Naive thymus-derived CD4-positive, alpha-beta T cell (primary cell): ENCODE measurements at regions of chr17 and their contacts with region 1.

Region 1: DNA sequence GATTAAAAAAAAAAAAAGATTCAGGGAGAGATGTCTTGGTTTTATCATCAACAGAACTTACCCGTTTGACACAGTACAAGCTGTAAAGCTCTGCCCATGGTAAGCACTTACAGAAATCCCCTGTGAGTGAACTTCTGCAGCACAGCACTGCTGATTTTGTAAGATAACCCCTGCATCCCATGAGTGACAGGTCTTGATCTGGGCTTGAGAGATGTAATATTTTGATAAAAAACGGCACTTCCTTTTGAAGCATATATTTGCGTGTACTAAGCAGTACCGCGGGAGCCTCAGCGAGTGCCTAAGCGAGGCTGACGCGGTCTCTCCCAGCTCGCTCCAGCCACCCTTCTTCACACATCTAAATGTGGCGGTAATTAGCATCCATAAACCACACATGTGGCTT is 50.5 kb downstream of the IKZF3 start:
- DNase-seq: peak in 7 of 9 donors; percentile 62 to 89 (median 71)
- ATAC-seq: peak; percentile 97
- H3K4me3 ChIP-seq: peak overlapping the region; percentile 17
- H3K4me3 Mint-ChIP-seq: peak overlapping the region; percentile 68 to 87 (median 78)
- H3K27ac ChIP-seq: peak overlapping the region; percentile 75
- H3K27ac Mint-ChIP-seq: peak overlapping the region; percentile 83 to 97 (median 91)
- H3K4me1 ChIP-seq: peaks cover 43 to 59% of the 10 kb centered on the region in 2 donors
- H3K4me1 Mint-ChIP-seq: peaks cover 32 to 94% (median 78%) of the 10 kb centered on the region in 7 donors
- H3K27me3 ChIP-seq: no peaks in the 10 kb centered on the region
- H3K27me3 Mint-ChIP-seq: no peaks in the 10 kb centered on the region

Region 2: DNA sequence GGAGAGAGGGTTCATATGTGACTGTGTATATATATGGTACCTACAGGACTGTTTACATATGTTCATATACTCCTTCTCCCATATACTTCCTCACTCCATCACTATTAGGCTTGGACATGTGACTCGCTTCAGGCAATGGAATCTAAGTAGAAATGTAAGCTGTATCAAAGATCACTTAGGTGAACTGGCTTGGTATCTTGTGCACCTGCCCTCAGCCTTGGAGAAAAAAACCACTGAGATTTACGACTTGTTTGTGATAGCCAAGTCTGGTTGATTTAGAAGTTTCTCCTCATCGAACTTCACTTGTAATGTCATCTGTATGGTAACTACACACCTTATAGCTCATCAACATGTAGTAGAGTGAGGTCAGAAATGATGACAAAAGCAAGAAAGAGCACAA is 472.1 kb before region 1 on chr17:
- CTCF ChIA-PET with region 1: no interaction called
- POLR2A ChIA-PET with region 1: no interaction called
- intact Hi-C with region 1: no loop called
- DNase-seq: no peak
- ATAC-seq: no peak
- H3K4me3 ChIP-seq: no peak overlapping the region
- H3K4me3 Mint-ChIP-seq: no peak overlapping the region
- H3K27ac ChIP-seq: no peak overlapping the region
- H3K27ac Mint-ChIP-seq: no peak overlapping the region
- H3K4me1 ChIP-seq: no peaks in the 10 kb centered on the region
- H3K4me1 Mint-ChIP-seq: peaks cover 0 to 11% (median 7%) of the 10 kb centered on the region in 7 donors
- H3K27me3 ChIP-seq: no peaks in the 10 kb centered on the region
- H3K27me3 Mint-ChIP-seq: no peaks in the 10 kb centered on the region

Region 3: DNA sequence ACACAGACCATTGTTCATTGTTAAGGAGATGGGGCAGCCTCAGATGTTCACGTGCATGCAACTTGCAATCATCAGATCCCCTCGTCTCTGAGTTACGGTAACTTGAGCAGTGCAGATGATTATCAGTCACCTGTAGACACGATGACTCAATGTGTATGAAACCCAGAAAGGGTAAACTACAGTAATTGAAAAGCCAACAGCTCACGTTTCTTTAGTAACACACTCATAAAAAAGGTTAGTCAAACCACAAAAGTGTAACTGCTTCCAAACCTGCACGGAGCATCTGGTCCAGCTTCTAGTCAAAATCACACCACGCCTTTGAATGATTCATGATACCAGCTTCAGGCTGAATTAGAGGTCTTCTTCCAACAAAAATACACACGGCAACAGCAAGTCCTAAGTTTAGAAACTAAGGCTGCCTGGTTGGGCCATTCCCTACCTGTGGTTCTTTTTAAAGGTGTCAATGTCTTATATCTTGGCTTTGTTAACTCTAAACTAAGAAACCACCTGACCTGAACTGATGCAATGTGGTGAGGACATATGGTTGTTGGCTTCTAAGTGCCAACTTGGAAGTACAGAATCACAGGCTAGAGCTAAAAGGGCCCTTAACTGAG is 43.5 kb before region 1 on chr17:
- CTCF ChIA-PET with region 1: interaction called, 3 read pairs
- POLR2A ChIA-PET with region 1: interaction called, 17 read pairs
- intact Hi-C with region 1: loop called (anchors 1 to 2 kb)
- DNase-seq: peak in 7 of 9 donors; percentile 46 to 81 (median 63)
- ATAC-seq: peak; percentile 81
- H3K4me3 ChIP-seq: no peak overlapping the region
- H3K4me3 Mint-ChIP-seq: peak overlapping the region; percentile 29 to 83 (median 57)
- H3K27ac ChIP-seq: peak overlapping the region; percentile 71
- H3K27ac Mint-ChIP-seq: peak overlapping the region; percentile 78 to 98 (median 94)
- H3K4me1 ChIP-seq: peaks cover 77 to 92% of the 10 kb centered on the region in 2 donors
- H3K4me1 Mint-ChIP-seq: peaks cover 73 to 99% (median 98%) of the 10 kb centered on the region in 7 donors
- H3K27me3 ChIP-seq: no peaks in the 10 kb centered on the region
- H3K27me3 Mint-ChIP-seq: no peaks in the 10 kb centered on the region

Region 4: GRCh38 chr17:39777534-39778365 is 35.9 kb before region 1 on chr17:
- CTCF ChIA-PET with region 1: interaction called, 3 read pairs
- POLR2A ChIA-PET with region 1: interaction called, 17 read pairs
- intact Hi-C with region 1: no loop called
- DNase-seq: peak in 1 of 9 donors; percentile 40
- ATAC-seq: peak; percentile 72
- H3K4me3 ChIP-seq: peak overlapping the region; percentile 74
- H3K4me3 Mint-ChIP-seq: peak overlapping the region; percentile 79 to 95 (median 90)
- H3K27ac ChIP-seq: peak overlapping the region; percentile 77
- H3K27ac Mint-ChIP-seq: peak overlapping the region; percentile 68 to 98 (median 94)
- H3K4me1 ChIP-seq: peaks cover 61 to 75% of the 10 kb centered on the region in 2 donors
- H3K4me1 Mint-ChIP-seq: peaks cover 60 to 91% (median 86%) of the 10 kb centered on the region in 7 donors
- H3K27me3 ChIP-seq: no peaks in the 10 kb centered on the region
- H3K27me3 Mint-ChIP-seq: no peaks in the 10 kb centered on the region

Region 5: DNA sequence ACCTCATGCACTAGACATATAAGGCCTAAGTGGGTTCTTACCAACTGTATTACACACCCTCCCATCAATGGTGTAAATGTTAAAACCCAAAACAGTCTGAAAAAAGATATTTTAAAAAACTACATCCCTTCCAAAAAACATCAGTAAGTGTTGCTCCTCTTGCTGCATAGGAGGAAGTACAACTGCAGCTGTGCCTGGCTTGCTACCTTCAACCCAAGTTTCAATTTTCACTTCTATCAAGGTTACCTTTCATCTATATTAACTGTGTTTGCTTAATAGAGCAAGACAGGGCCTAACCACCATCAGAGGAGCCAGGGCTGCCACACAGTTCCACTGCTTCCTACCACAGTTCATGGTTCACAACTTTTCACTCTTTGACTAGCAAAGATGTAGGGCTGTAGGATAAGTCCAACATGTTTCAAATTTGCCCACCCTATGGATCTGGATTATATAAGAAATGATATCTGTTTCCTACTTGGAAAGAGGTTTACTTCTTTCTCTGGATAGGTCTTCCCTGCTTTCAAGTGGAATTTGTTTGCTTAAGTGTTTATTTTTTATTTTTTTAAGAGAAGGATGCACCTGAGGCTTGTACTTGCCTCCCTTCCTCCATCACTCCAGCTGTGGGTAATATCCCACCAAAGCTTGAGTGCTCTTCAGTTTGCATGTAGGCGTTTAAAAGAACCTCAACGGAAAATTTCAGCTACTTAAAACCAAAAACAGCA is 19.2 kb before region 1 on chr17:
- CTCF ChIA-PET with region 1: interaction called, 10 read pairs
- POLR2A ChIA-PET with region 1: interaction called, 41 read pairs
- intact Hi-C with region 1: loop called in 1 of 2 experiments (anchors 1 kb)
- DNase-seq: peak in 7 of 9 donors; percentile 28 to 67 (median 44)
- ATAC-seq: peak; percentile 83
- H3K4me3 ChIP-seq: peak overlapping the region; percentile 2
- H3K4me3 Mint-ChIP-seq: peak overlapping the region; percentile 37 to 82 (median 76)
- H3K27ac ChIP-seq: peak overlapping the region; percentile 65
- H3K27ac Mint-ChIP-seq: peak overlapping the region; percentile 86 to 96 (median 93)
- H3K4me1 ChIP-seq: peaks cover 56 to 66% of the 10 kb centered on the region in 2 donors
- H3K4me1 Mint-ChIP-seq: peaks cover 49 to 86% (median 82%) of the 10 kb centered on the region in 7 donors
- H3K27me3 ChIP-seq: no peaks in the 10 kb centered on the region
- H3K27me3 Mint-ChIP-seq: no peaks in the 10 kb centered on the region

Region 6: DNA sequence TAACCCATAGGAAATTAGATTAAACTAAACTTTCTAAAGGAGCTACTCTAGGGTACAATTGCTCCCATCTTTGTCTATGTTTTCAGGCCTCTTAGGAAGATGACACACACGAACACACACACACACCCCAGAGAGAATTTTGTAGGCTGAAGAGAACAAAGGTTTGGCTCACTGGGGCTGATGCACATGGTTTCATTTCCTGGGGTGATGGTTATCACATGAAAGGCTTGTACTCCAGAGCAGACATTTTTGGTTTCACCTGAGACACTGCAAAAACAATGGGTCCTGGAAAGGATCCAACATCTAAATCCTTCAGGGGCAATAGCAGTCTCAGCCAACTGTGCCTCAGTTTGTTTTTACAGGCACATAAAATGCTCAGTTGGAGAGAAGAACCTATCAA is 13.1 kb before region 1 on chr17:
- CTCF ChIA-PET with region 1: interaction called, 6 read pairs
- POLR2A ChIA-PET with region 1: interaction called, 17 read pairs
- intact Hi-C with region 1: loop called (anchors 1 to 2 kb)
- DNase-seq: peak in 8 of 9 donors; percentile 46 to 81 (median 80)
- ATAC-seq: peak; percentile 99
- H3K4me3 ChIP-seq: peak overlapping the region; percentile 38
- H3K4me3 Mint-ChIP-seq: peak overlapping the region; percentile 22 to 81 (median 61)
- H3K27ac ChIP-seq: peak overlapping the region; percentile 52
- H3K27ac Mint-ChIP-seq: peak overlapping the region; percentile 89 to 97 (median 94)
- H3K4me1 ChIP-seq: peaks cover 27 to 53% of the 10 kb centered on the region in 2 donors
- H3K4me1 Mint-ChIP-seq: peaks cover 35 to 82% (median 69%) of the 10 kb centered on the region in 7 donors
- H3K27me3 ChIP-seq: no peaks in the 10 kb centered on the region
- H3K27me3 Mint-ChIP-seq: no peaks in the 10 kb centered on the region

Region 7: GRCh38 chr17:39845052-39845846 is 31.6 kb after region 1 on chr17:
- CTCF ChIA-PET with region 1: no interaction called
- POLR2A ChIA-PET with region 1: interaction called, 6 read pairs
- intact Hi-C with region 1: loop called in 1 of 2 experiments (anchors 5 kb)
- DNase-seq: no peak
- ATAC-seq: no peak
- H3K4me3 ChIP-seq: no peak overlapping the region
- H3K4me3 Mint-ChIP-seq: peak overlapping the region in 3 of 10 donors; percentile 2 to 30 (median 12)
- H3K27ac ChIP-seq: peak overlapping the region; percentile 57
- H3K27ac Mint-ChIP-seq: peak overlapping the region in 8 of 9 donors; percentile 68 to 94 (median 87)
- H3K4me1 ChIP-seq: peaks cover 32 to 36% of the 10 kb centered on the region in 2 donors
- H3K4me1 Mint-ChIP-seq: peaks cover 38 to 94% (median 83%) of the 10 kb centered on the region in 7 donors
- H3K27me3 ChIP-seq: no peaks in the 10 kb centered on the region
- H3K27me3 Mint-ChIP-seq: no peaks in the 10 kb centered on the region